MCF 10A (cell line): ENCODE measurements at regions of chr3 and their contacts with region 1.

Region 1: DNA sequence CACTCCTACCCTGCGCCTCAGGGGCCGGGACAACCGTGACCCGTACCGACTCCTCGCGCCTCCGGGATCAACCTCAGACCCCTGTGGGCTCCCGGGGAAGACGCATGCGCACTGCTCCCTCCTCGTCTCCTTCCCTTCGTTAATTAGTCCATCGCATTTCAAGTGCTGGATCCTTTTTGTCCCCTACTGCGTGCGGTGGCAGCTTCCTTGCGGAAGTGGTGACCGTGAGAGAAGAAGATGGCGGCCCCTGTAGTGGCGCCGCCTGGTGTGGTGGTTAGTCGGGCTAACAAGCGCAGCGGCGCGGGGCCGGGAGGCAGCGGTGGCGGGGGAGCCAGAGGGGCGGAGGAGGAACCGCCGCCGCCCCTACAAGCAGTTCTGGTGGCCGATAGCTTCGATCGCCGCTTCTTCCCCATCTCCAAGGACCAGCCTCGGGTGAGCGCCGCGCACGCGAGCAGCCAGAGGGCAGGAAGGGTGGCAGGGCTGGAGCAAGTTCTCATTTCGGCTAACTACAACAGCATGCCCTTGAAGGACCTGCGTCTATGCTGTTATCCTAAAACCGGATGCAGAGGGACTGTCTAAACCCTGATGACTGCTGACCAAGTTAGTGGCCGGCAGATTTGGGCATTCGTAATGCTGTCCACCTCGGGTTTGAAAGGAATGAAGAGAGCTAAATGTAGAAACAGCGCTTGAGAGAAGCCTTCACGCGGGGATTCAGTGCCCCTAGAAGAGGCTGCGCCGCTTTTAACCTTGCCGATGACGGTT is at the start of gene EIF2B5:
- DNase-seq: peak; percentile 93
- H3K4me3 Mint-ChIP-seq: peak within 1 kb of the TSS; percentile 99
- H3K27ac Mint-ChIP-seq: peak within 1 kb of the TSS; percentile 83
- H3K4me1 Mint-ChIP-seq: peaks cover 21% of the 10 kb centered on the region
- H3K27me3 Mint-ChIP-seq: no peaks in the 10 kb centered on the region
- CTCF ChIP-seq: peak; percentile 22
- total RNA-seq, gene EIF2B5: 33.8 and 36.1 TPM in 2 replicates

Region 2: GRCh38 chr3:183895296-183895695 is 240.0 kb before region 1 on chr3:
- CTCF ChIA-PET with region 1: interaction called, 9 read pairs
- POLR2A ChIA-PET with region 1: interaction called, 7 read pairs
- intact Hi-C with region 1: loop called (anchors 2 kb)
- DNase-seq: peak; percentile 60
- H3K4me3 Mint-ChIP-seq: no peak overlapping the region
- H3K27ac Mint-ChIP-seq: no peak overlapping the region
- H3K4me1 Mint-ChIP-seq: no peaks in the 10 kb centered on the region
- H3K27me3 Mint-ChIP-seq: no peaks in the 10 kb centered on the region
- CTCF ChIP-seq: peak; percentile 82

Region 3: DNA sequence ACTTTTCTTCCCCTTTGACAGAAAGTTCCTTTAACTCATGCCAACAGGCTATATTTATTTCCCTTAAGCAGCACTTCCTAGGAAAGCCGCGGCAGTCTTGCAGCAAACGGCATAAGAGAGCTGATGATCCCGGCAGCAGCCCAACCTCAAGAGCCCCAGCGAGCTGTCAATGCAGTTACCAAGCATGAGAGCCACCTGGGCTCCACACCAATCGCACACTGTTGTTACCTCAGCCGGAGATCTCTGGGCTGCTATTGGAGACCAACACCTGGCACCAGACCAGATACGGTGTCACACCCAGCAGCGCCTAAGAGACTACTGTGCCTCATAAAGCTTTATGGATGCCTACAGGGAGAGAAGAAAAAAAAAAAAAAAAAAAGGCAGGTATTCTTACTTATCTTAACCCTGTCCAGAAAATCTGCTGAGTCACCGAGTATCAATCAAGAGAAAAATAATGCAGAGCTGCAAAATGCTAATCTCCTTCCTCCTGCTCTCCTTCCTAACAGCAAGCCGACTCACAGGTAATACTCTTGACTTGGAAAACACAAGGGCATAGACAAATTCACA is 129.3 kb before region 1 on chr3:
- CTCF ChIA-PET with region 1: no interaction called
- POLR2A ChIA-PET with region 1: interaction called, 25 read pairs
- intact Hi-C with region 1: no loop called
- DNase-seq: peak; percentile 86
- H3K4me3 Mint-ChIP-seq: peak overlapping the region; percentile 50
- H3K27ac Mint-ChIP-seq: peak overlapping the region; percentile 37
- H3K4me1 Mint-ChIP-seq: peaks cover 12% of the 10 kb centered on the region
- H3K27me3 Mint-ChIP-seq: no peaks in the 10 kb centered on the region
- CTCF ChIP-seq: no peak

Region 4: GRCh38 chr3:184040010-184040409 is 95.3 kb before region 1 on chr3:
- CTCF ChIA-PET with region 1: interaction called, 6 read pairs
- POLR2A ChIA-PET with region 1: interaction called, 10 read pairs
- intact Hi-C with region 1: loop called (anchors 10 kb)
- DNase-seq: peak; percentile 49
- H3K4me3 Mint-ChIP-seq: no peak overlapping the region
- H3K27ac Mint-ChIP-seq: no peak overlapping the region
- H3K4me1 Mint-ChIP-seq: peaks cover 17% of the 10 kb centered on the region
- H3K27me3 Mint-ChIP-seq: no peaks in the 10 kb centered on the region
- CTCF ChIP-seq: peak; percentile 13

Region 5: DNA sequence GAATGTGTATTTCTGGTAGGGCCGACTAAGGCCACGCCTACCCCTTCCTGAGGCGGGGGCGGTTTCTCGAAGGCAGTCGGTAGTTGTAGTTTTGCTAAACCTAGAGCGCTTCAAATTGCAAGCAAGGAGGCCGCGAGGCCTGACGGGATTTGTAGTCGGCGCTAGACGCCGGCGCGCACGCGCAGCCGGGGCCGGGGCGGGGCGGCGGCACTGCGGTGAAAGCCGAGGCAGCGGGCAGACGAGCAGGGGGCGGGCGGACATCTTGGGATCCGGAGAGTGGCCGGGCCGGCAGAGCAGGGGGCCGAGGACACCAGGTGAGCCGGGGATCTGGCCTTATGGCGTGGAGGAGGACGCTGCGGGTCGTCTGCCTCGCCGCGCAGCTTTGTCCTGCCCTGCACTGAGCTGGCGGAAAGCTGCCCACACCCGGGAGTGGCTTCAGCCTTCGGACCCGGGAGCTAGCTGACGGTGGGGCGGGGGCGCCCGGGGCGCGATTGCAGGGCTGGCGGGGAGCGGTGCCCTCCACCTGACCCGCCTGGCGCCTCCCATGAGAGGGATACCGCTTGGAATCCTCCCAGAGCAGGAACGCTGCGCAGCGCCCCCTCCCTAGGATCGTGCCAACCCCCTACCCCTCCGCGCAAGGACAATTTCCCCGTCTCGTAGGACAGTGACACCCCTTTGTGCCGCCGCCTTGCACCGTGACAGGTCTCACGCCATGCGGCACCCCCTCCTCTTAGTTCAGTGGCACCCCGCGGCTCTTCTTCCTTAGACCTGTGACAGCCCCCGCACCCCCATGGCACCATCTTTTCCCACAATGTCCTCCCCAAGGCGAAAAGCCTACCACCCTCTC is 39.5 kb after region 1 on chr3 and contains the start of gene AP2M1:
- CTCF ChIA-PET with region 1: no interaction called
- POLR2A ChIA-PET with region 1: interaction called, 31 read pairs
- intact Hi-C with region 1: no loop called
- DNase-seq: peak; percentile 99
- H3K4me3 Mint-ChIP-seq: peak within 1 kb of the TSS; percentile 100
- H3K27ac Mint-ChIP-seq: peak within 1 kb of the TSS; percentile 95
- H3K4me1 Mint-ChIP-seq: peaks cover 29% of the 10 kb centered on the region
- H3K27me3 Mint-ChIP-seq: no peaks in the 10 kb centered on the region
- CTCF ChIP-seq: no peak
- total RNA-seq, gene AP2M1: 280 and 301 TPM in 2 replicates